ENCODE measurements at regions of chr7 and their contacts with region 1.

Region 1: DNA sequence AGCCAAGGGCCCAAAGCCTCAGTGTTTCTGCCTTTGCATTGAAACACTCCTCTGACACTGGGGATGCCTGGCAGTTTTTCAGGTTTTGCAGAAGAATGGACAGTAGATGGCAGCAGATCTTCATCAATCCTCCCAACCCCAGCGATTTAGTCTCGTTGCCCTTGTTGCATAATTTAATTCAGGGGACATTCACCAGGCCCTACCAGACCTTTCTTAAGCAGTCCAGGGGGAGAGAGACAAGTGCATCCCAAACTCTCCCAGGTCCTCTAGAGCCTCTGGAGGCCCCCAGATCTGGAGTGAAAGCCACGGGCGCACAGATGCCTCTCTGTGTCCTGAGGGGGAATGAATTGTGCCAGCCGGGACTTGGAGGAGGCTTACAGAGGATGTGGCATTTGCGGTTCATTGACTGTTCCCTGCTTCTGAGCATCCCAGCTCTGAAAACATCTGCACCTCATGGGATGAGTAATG is 29.6 kb downstream of the MINDY4 start:
- DNase-seq: peak in 1 of 2 donors; percentile 85
- H3K4me3 ChIP-seq: no peak overlapping the region
- H3K27ac ChIP-seq: peak overlapping the region; percentile 86 to 91
- H3K4me1 ChIP-seq: peaks cover 25 to 65% of the 10 kb centered on the region in 2 donors
- H3K27me3 ChIP-seq: no peaks in the 10 kb centered on the region
- CTCF ChIP-seq: peak; percentile 71 to 87 (median 76)

Region 2: GRCh38 chr7:30504347-30505173 is 296.3 kb before region 1 on chr7 and contains the start of gene GGCT:
- intact Hi-C with region 1: no loop called
- DNase-seq: peak; percentile 99 to 100
- H3K4me3 ChIP-seq: peak within 1 kb of the TSS; percentile 88 to 95
- H3K27ac ChIP-seq: peak within 1 kb of the TSS; percentile 88 to 93
- H3K4me1 ChIP-seq: peaks cover 2 to 6% of the 10 kb centered on the region in 2 donors
- H3K27me3 ChIP-seq: no peaks in the 10 kb centered on the region
- CTCF ChIP-seq: no peak
- total RNA-seq, gene GGCT: 0.43 TPM

Region 3: DNA sequence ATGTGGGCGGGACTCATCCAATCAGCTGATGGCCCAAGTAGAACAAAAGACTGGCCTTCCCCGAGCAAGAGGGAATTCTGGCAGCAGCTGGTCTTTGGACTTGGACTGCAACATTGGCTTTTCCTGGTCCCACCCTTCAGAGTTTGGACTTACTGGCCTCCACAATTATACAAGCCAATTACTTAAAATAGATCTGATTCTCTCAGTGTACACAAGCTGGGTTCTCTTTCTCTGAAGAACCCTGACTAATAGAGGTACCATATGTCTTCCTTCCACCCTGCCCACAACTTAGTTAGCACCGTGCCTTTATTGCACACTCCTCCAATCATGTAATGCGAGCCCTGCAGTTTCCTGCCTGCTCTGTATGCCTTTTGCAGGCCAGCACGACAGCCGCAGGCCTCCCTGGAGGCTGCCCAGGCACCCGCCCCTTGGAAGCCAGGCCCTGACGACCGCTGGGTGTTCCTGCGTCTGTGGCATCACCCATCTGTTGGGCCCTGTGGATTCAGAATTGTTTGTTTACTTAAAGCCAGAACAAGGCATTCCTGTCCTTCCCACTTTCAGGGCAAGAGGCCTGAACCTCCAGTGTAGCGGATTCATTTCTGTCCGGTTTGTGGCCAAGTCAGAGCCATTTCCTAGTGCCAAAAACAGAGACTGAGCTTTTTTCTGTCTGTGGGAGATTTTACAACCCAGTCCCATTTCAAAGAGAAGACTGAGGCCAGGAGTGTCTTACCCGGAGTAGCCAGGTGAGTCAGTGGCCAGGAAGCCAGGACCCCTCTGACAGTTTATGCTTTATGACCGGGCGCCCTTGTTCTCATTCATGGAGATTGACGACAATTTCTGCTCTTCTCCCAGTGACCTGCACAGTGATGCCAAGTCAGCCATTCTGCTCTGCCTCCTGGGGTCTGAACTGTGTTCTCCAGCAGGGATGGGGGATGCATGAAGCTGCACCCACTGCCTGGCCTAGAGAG is 49.9 kb before region 1 on chr7:
- intact Hi-C with region 1: loop called (anchors 2 kb)
- DNase-seq: peak in 1 of 2 donors; percentile 88
- H3K4me3 ChIP-seq: peak overlapping the region in 1 of 2 donors; percentile 71
- H3K27ac ChIP-seq: peak overlapping the region; percentile 81 to 91
- H3K4me1 ChIP-seq: peaks cover 2 to 48% of the 10 kb centered on the region in 2 donors
- H3K27me3 ChIP-seq: no peaks in the 10 kb centered on the region
- CTCF ChIP-seq: no peak

Region 4: DNA sequence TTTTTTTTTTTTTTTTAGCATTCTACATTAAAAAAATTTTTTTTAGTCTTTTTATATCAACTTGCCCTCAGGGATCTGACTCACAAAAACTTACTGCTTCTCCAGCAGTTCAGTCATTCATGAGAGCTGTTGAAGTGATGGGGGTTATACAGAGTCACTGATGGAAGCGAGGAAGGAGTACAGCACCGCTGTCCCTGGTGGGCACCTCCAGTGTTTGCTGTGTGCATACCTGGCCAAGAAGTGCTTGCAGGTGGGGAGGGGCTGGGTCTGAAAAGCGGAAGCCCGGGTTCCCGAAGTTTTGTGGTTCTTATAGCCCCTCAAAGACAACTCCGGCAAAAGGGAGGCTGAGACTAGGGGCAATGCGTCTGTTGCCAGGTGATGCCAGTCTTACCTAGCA is 16.6 kb after region 1 on chr7:
- intact Hi-C with region 1: loop called (anchors 1 kb)
- DNase-seq: peak in 1 of 2 donors; percentile 69
- H3K4me3 ChIP-seq: peak overlapping the region in 1 of 2 donors; percentile 11
- H3K27ac ChIP-seq: peak overlapping the region; percentile 95
- H3K4me1 ChIP-seq: peaks cover 24 to 61% of the 10 kb centered on the region in 2 donors
- H3K27me3 ChIP-seq: no peaks in the 10 kb centered on the region
- CTCF ChIP-seq: no peak

Region 5: GRCh38 chr7:30851651-30852307 is 51.0 kb after region 1 on chr7:
- intact Hi-C with region 1: loop called (anchors 1 kb)
- DNase-seq: peak; percentile 64 to 93
- H3K4me3 ChIP-seq: peak overlapping the region; percentile 7 to 46
- H3K27ac ChIP-seq: peak overlapping the region; percentile 98
- H3K4me1 ChIP-seq: peaks cover 15 to 57% of the 10 kb centered on the region in 2 donors
- H3K27me3 ChIP-seq: no peaks in the 10 kb centered on the region
- CTCF ChIP-seq: no peak

Region 6: GRCh38 chr7:30974605-30975255 is 173.9 kb after region 1 on chr7:
- intact Hi-C with region 1: loop called (anchors 1 kb)
- DNase-seq: peak in 1 of 2 donors; percentile 73
- H3K4me3 ChIP-seq: no peak overlapping the region
- H3K27ac ChIP-seq: no peak overlapping the region
- H3K4me1 ChIP-seq: no peaks in the 10 kb centered on the region
- H3K27me3 ChIP-seq: no peaks in the 10 kb centered on the region
- CTCF ChIP-seq: peak; percentile 45 to 69 (median 52)

Region 7: DNA sequence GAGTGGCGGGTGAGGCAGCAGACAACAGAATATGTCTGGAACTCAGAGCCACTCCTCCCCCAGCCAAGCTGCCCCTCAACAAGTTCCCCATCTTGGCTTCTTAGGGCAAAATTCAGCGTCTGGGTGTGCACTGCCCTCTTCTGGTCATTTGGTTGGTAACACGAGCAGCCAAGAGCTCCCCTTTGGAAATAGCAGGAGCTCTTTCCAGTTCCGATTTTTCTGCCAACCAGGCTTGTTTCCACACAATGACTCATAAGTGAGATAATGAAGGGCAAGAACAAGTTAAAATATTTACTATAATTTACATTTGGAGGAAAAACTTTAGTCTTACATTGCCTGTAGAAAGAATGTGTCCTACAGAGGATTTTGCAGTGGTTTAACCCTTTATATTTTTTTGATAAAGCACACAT is 321.8 kb after region 1 on chr7:
- intact Hi-C with region 1: loop called (anchors 1 kb)
- DNase-seq: peak in 1 of 2 donors; percentile 79
- H3K4me3 ChIP-seq: no peak overlapping the region
- H3K27ac ChIP-seq: no peak overlapping the region
- H3K4me1 ChIP-seq: no peaks in the 10 kb centered on the region
- H3K27me3 ChIP-seq: no peaks in the 10 kb centered on the region
- CTCF ChIP-seq: peak; percentile 59 to 81 (median 67)